BJ (cell line): ENCODE measurements at regions of chr18 and their contacts with region 1.

Region 1: DNA sequence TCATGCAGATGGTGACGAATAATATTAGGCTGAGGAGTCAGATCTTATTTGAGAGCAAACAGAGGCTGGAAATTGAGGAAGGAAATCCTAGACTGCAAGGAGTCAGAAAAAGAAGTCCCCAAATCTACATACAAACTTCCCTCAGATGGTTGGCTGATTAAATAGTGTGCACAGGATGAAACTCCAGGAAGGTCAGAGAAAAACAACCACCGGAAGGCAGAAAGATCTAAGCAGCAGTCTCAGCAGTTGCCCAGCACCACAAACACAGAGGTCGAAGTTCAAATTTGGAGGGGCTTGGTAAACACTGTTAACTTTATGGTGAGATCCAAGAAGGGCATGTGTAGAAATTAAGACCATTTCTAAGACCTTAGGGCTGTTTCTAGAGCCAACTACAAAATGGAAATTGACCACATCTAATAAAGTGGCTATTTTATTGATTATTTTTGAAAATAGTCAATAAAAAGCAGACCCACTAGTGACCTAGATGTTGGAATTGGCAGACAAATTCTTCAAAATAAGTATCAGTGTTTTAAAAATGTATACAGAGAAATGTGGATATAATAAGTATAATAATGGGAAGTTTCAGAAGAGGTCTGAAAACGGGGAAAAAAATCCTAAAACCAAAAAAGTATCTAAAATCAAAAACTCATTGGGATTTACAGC is 134.8 kb downstream of the GALNT1 start:
- DNase-seq: no peak
- H3K4me3 ChIP-seq: no peak overlapping the region
- H3K27me3 ChIP-seq: no peaks in the 10 kb centered on the region
- CTCF ChIP-seq: no peak

Region 2: GRCh38 chr18:35410561-35410960 is 305.7 kb before region 1 on chr18:
- CTCF ChIA-PET with region 1: no interaction called
- POLR2A ChIA-PET with region 1: interaction called, 14 read pairs
- DNase-seq: no peak
- H3K4me3 ChIP-seq: no peak overlapping the region
- H3K27me3 ChIP-seq: peaks cover 3% of the 10 kb centered on the region
- CTCF ChIP-seq: no peak

Region 3: DNA sequence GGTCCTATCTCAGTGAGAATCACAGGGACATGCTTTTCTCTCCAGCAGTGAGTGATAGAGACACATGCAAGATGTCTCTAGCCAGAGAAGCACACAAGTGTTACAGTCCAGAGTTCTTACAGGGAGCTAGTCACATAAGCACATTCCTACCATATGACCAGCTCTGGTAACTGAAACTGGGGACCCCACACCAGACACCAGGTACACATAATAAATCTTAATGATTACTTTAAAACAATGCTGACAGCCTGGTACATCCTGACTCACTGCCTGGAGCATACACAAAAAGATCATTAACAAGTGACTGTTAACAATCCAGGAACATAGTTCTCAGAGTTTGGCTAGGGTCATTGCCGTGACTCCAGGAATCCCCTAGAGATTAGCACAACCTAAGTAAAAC is 81.1 kb before region 1 on chr18:
- CTCF ChIA-PET with region 1: no interaction called
- POLR2A ChIA-PET with region 1: no interaction called
- DNase-seq: peak; percentile 54
- H3K4me3 ChIP-seq: no peak overlapping the region
- H3K27me3 ChIP-seq: no peaks in the 10 kb centered on the region
- CTCF ChIP-seq: no peak

Region 4: DNA sequence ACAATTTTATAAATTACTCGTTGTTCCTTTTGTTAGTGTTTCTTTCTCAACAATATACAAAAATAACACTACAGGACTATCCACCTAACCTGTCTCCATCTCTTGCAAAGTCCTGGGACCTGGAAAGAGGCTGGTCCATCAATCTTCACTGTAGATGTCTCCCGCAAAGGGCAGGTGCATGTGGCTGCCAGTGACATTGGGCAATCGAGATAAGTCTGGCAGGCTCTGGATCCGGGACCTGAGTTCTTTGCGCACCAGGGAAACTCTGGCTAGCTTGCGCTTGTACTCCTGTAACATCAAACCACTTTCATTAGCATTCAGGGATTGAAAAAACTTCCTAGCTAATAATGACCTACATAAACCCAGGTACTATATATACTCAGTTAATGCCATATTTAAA is 276.7 kb after region 1 on chr18:
- CTCF ChIA-PET with region 1: no interaction called
- POLR2A ChIA-PET with region 1: no interaction called
- DNase-seq: no peak
- H3K4me3 ChIP-seq: no peak overlapping the region
- H3K27me3 ChIP-seq: no peaks in the 10 kb centered on the region
- CTCF ChIP-seq: no peak